CD8-positive, alpha-beta memory T cell (primary cell): ENCODE measurements at regions of chr2 and their contacts with region 1.

Region 1: GRCh38 chr2:84741296-84741765 is 139.6 kb downstream of the TRABD2A start:
- DNase-seq: peak; percentile 17 to 71 (median 52)
- H3K4me3 ChIP-seq: no peak overlapping the region
- H3K4me3 Mint-ChIP-seq: peak overlapping the region in 2 of 7 donors; percentile 16 to 63
- H3K27ac ChIP-seq: no peak overlapping the region
- H3K27ac Mint-ChIP-seq: peak overlapping the region in 7 of 8 donors; percentile 48 to 79 (median 71)
- H3K4me1 ChIP-seq: peaks cover 20% of the 10 kb centered on the region
- H3K4me1 Mint-ChIP-seq: peaks cover 26 to 34% (median 26%) of the 10 kb centered on the region in 3 donors
- H3K27me3 ChIP-seq: no peaks in the 10 kb centered on the region
- H3K27me3 Mint-ChIP-seq: no peaks in the 10 kb centered on the region

Region 2: GRCh38 chr2:84701895-84702294 is 39.4 kb before region 1 on chr2:
- CTCF ChIA-PET with region 1: no interaction called
- POLR2A ChIA-PET with region 1: no interaction called
- DNase-seq: no peak
- H3K4me3 ChIP-seq: no peak overlapping the region
- H3K4me3 Mint-ChIP-seq: no peak overlapping the region
- H3K27ac ChIP-seq: no peak overlapping the region
- H3K27ac Mint-ChIP-seq: no peak overlapping the region
- H3K4me1 ChIP-seq: peaks cover 9% of the 10 kb centered on the region
- H3K4me1 Mint-ChIP-seq: peaks cover 3 to 8% (median 4%) of the 10 kb centered on the region in 3 donors
- H3K27me3 ChIP-seq: no peaks in the 10 kb centered on the region
- H3K27me3 Mint-ChIP-seq: no peaks in the 10 kb centered on the region

Region 3: DNA sequence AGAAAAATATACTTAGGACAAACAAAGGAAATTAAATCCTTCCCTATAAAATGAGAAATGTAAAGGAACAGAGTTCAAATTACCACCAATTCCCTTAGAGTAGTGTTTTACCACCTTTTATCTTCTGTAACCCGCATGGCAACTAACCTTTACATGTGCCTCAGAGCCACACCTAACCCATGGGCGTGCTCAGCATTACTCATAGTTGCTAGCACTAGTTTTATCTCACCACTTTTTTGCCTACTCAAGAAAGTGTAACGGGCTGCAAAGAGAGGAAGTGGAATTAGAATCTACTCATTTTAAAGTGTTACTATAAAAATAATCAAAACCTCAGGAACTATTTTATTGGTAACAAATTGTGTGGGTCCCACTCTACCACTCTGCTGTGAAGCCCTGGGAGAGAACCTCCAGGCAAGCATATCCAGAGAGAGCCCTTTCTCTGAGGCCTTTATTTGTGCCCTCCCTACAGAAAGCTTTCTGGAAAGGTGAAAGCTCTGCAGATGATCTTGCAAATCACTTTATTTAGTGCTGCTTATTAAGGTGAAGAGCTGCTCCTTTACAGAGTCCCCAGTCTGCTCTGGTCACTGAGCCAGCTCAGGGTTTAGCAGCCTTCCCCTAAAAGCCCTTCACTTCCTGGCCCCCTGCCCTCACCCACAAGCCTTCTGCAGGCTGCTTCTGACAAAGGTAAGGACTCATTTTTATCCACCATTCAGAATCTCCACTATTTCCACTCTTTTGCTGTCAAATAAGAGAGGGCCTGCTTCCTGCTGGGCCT is 40.8 kb after region 1 on chr2:
- CTCF ChIA-PET with region 1: interaction called, 20 read pairs
- POLR2A ChIA-PET with region 1: interaction called, 8 read pairs
- DNase-seq: peak; percentile 16 to 79 (median 52)
- H3K4me3 ChIP-seq: peak overlapping the region; percentile 12
- H3K4me3 Mint-ChIP-seq: peak overlapping the region; percentile 35 to 82 (median 74)
- H3K27ac ChIP-seq: peak overlapping the region; percentile 48
- H3K27ac Mint-ChIP-seq: peak overlapping the region; percentile 82 to 98 (median 92)
- H3K4me1 ChIP-seq: peaks cover 70% of the 10 kb centered on the region
- H3K4me1 Mint-ChIP-seq: peaks cover 76 to 91% (median 87%) of the 10 kb centered on the region in 3 donors
- H3K27me3 ChIP-seq: no peaks in the 10 kb centered on the region
- H3K27me3 Mint-ChIP-seq: peaks cover 0 to 2% of the 10 kb centered on the region in 2 donors

Region 4: DNA sequence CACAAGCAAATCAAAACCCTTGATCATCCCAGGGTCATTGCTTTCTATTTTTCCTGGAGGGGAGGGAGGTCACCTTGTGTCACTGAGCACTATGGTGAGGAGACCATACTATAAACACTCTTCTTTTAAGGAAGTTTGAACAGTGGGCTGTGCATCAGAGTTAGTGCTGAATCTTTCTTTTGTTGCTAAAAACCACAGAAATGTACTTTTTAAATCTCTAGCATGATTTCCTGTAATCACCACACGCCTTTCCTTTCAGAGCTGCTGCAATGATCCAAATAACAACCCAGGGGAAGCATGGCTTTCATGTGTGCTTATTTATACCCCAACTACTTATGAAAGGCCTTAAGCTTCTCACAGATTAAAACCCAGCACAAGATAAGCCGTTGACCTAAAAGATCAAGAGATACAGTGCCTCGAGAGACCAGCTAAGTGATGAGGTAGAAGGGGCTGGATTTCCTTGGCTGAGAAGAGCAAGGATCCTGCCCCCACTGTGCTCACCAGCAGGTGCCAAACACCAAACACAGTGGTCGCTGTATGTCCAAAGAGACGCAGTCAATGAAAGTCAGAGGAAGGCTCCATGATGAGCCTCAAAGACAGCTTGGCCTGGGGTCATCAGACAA is 104.8 kb after region 1 on chr2:
- CTCF ChIA-PET with region 1: interaction called, 11 read pairs
- POLR2A ChIA-PET with region 1: no interaction called
- DNase-seq: peak in 3 of 5 donors; percentile 62 to 85 (median 75)
- H3K4me3 ChIP-seq: peak overlapping the region; percentile 40
- H3K4me3 Mint-ChIP-seq: peak overlapping the region; percentile 25 to 83 (median 69)
- H3K27ac ChIP-seq: peak overlapping the region; percentile 12
- H3K27ac Mint-ChIP-seq: peak overlapping the region; percentile 85 to 98 (median 94)
- H3K4me1 ChIP-seq: peaks cover 96% of the 10 kb centered on the region
- H3K4me1 Mint-ChIP-seq: peaks cover 86 to 96% (median 95%) of the 10 kb centered on the region in 3 donors
- H3K27me3 ChIP-seq: no peaks in the 10 kb centered on the region
- H3K27me3 Mint-ChIP-seq: no peaks in the 10 kb centered on the region

Region 5: DNA sequence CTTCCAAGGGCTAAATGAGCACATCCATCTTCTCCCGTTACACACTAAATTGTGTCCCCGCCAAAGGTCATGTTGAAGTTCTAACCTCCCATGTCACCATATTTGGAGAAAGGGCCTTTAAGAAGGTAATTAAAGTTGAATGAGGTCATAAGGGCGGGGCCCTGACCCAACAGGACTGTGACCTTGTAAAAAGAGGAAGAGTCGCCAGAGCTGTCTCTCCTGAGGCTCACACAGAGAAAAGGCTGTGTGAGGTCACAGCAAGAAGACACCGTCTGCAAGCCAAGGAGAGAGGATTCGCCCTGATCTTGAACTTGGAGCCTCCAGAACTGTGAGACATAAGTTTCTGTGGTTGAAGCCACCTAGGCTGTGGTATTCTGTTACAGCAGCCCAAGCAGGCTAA is 115.5 kb after region 1 on chr2:
- CTCF ChIA-PET with region 1: interaction called, 17 read pairs
- POLR2A ChIA-PET with region 1: no interaction called
- DNase-seq: no peak
- H3K4me3 ChIP-seq: peak overlapping the region; percentile 36
- H3K4me3 Mint-ChIP-seq: peak overlapping the region in 6 of 7 donors; percentile 1 to 54 (median 38)
- H3K27ac ChIP-seq: no peak overlapping the region
- H3K27ac Mint-ChIP-seq: peak overlapping the region; percentile 47 to 97 (median 80)
- H3K4me1 ChIP-seq: peaks cover 96% of the 10 kb centered on the region
- H3K4me1 Mint-ChIP-seq: peaks cover 82 to 96% (median 95%) of the 10 kb centered on the region in 3 donors
- H3K27me3 ChIP-seq: no peaks in the 10 kb centered on the region
- H3K27me3 Mint-ChIP-seq: no peaks in the 10 kb centered on the region

Region 6: DNA sequence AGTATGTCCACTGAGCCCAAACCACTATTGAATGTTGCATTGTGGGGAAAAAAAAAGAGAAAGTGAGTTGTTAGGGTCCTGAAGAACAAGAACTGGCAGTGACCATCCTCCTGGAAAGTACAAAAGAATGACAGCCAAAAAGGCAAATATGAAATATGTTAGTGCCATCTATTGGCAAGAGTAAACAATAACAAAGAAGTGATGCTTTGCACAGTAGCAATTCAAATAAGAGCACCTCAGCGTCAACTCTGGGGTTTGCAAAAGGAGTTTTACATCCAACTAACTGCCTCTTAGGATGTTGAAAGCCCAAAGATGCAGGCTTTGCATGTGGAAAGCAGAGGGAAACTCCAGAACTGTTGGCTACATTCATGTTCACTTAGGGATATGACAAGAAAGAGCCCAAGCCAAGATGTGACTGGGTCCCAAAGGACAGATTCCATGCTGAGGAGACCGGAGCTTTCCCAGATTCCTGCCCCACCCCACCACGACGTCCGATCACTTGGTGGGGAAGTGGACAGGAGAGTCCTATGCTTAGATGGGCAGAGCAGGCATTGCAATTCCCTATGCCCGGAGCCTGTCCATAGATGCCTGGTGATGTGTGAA is 124.0 kb after region 1 on chr2:
- CTCF ChIA-PET with region 1: interaction called, 23 read pairs
- POLR2A ChIA-PET with region 1: no interaction called
- DNase-seq: peak in 2 of 5 donors; percentile 50 to 58
- H3K4me3 ChIP-seq: no peak overlapping the region
- H3K4me3 Mint-ChIP-seq: peak overlapping the region in 2 of 7 donors; percentile 8 to 66
- H3K27ac ChIP-seq: no peak overlapping the region
- H3K27ac Mint-ChIP-seq: peak overlapping the region; percentile 41 to 88 (median 70)
- H3K4me1 ChIP-seq: peaks cover 72% of the 10 kb centered on the region
- H3K4me1 Mint-ChIP-seq: peaks cover 54 to 82% (median 63%) of the 10 kb centered on the region in 3 donors
- H3K27me3 ChIP-seq: no peaks in the 10 kb centered on the region
- H3K27me3 Mint-ChIP-seq: no peaks in the 10 kb centered on the region

Region 7: GRCh38 chr2:85772019-85772745 is 1030.9 kb after region 1 on chr2:
- CTCF ChIA-PET with region 1: no interaction called
- POLR2A ChIA-PET with region 1: no interaction called
- DNase-seq: no peak
- H3K4me3 ChIP-seq: no peak overlapping the region
- H3K4me3 Mint-ChIP-seq: peak overlapping the region in 1 of 7 donors; percentile 32
- H3K27ac ChIP-seq: no peak overlapping the region
- H3K27ac Mint-ChIP-seq: no peak overlapping the region
- H3K4me1 ChIP-seq: no peaks in the 10 kb centered on the region
- H3K4me1 Mint-ChIP-seq: peaks cover 0 to 5% (median 2%) of the 10 kb centered on the region in 3 donors
- H3K27me3 ChIP-seq: peaks cover 12% of the 10 kb centered on the region
- H3K27me3 Mint-ChIP-seq: peaks cover 15 to 50% of the 10 kb centered on the region in 2 donors